PC-3 (cell line): ENCODE measurements at regions of chr7 and their contacts with region 1.

Region 1: GRCh38 chr7:5607951-5608656 is 173.4 kb downstream of the RNF216 start:
- DNase-seq: peak; percentile 59
- ATAC-seq: peak; percentile 67
- H3K4me3 ChIP-seq: no peak overlapping the region
- H3K27ac ChIP-seq: peak overlapping the region; percentile 78
- H3K4me1 ChIP-seq: peaks cover 13% of the 10 kb centered on the region
- H3K27me3 ChIP-seq: no peaks in the 10 kb centered on the region
- CTCF ChIP-seq: no peak

Region 2: DNA sequence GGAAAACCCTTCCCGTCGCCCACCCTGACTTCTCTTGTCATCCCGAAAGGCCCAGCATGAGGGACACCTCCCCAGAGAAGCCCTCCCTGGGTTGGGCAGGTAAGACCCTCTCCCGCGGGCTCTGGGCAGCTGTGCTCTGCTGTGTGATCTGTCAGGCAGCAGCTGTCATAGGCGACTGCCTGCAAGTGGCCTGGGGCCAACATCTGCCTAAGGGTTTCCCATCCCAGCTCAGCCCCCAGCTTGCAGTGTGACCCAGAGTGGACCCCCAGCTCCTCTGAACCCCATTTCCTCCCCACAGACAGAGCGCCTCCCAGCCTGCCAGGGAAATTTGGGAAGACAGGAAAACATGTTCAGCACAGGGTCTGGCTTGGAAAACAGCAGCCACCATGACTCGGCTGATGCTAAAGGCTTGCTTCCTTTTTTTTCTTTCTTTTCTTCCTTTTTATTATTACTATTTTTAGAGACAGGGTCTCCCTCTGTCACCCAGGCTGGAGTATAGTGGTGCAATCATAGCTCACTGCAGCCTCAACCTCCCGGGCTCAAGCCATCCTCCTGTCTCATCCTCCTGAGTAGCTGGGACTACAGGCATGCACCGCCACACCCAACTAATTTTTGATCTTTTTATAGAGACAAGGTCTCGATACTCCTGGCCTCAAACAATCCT is 166.1 kb before region 1 on chr7:
- CTCF ChIA-PET with region 1: no interaction called
- POLR2A ChIA-PET with region 1: no interaction called
- intact Hi-C with region 1: no loop called
- DNase-seq: no peak
- ATAC-seq: no peak
- H3K4me3 ChIP-seq: no peak overlapping the region
- H3K27ac ChIP-seq: no peak overlapping the region
- H3K4me1 ChIP-seq: no peaks in the 10 kb centered on the region
- H3K27me3 ChIP-seq: no peaks in the 10 kb centered on the region
- CTCF ChIP-seq: no peak

Region 3: DNA sequence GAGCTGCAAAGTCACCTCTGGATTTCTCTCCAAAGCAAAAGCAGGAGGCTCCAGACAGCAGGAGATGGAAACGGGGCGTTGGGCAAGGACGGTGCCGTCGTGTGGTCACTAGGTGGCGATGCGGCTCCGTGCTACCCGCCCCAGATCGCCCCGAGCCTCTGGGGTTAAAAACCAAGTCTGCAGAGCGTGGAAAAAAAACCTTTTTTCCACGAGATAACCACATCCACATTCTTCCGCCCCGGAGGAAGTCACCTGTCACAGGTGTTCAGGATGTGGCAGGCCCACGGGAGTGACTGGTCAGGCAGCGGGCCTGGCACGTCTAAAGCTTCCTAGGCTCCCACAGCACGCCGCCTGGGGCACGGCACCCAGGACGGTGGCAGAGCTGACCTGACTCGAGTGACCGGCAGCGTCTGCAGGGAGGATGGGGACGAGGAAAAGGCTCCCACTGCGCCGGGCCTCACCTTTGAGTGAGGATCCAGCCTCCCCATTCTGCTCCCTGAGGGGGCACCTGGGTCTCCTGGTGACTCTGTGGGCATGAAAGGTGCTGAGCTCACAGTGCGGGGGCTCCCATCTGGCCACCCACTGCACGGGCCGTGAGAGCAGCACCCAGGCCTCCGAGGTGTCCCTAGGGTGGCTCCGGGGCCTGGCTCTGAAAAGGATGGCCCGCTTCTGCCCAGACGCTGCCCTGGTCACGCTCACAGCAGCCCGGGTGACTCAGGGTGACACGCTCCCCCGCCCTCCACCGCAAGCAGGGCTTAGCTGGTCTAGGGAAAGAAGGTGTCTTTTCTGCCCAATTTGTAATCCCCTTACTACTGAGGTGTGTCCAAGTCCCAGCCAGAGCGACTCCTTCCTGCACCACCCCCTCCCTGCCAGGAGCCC is 113.2 kb before region 1 on chr7:
- CTCF ChIA-PET with region 1: no interaction called
- POLR2A ChIA-PET with region 1: interaction called, 14 read pairs
- intact Hi-C with region 1: no loop called
- DNase-seq: peak; percentile 83
- ATAC-seq: peak; percentile 79
- H3K4me3 ChIP-seq: peak overlapping the region; percentile 64
- H3K27ac ChIP-seq: peak overlapping the region; percentile 78
- H3K4me1 ChIP-seq: peaks cover 14% of the 10 kb centered on the region
- H3K27me3 ChIP-seq: no peaks in the 10 kb centered on the region
- CTCF ChIP-seq: peak; percentile 89

Region 4: GRCh38 chr7:5564879-5565278 is 43.2 kb before region 1 on chr7:
- CTCF ChIA-PET with region 1: no interaction called
- POLR2A ChIA-PET with region 1: interaction called, 23 read pairs
- intact Hi-C with region 1: no loop called
- DNase-seq: no peak
- ATAC-seq: no peak
- H3K4me3 ChIP-seq: no peak overlapping the region
- H3K27ac ChIP-seq: no peak overlapping the region
- H3K4me1 ChIP-seq: peaks cover 12% of the 10 kb centered on the region
- H3K27me3 ChIP-seq: no peaks in the 10 kb centered on the region
- CTCF ChIP-seq: no peak

Region 5: GRCh38 chr7:5838761-5839500 is 230.8 kb after region 1 on chr7:
- CTCF ChIA-PET with region 1: no interaction called
- POLR2A ChIA-PET with region 1: no interaction called
- intact Hi-C with region 1: no loop called
- DNase-seq: no peak
- ATAC-seq: no peak
- H3K4me3 ChIP-seq: no peak overlapping the region
- H3K27ac ChIP-seq: no peak overlapping the region
- H3K4me1 ChIP-seq: no peaks in the 10 kb centered on the region
- H3K27me3 ChIP-seq: no peaks in the 10 kb centered on the region
- CTCF ChIP-seq: no peak